ENCODE measurements at regions of chr9 and their contacts with region 1.

Region 1: GRCh38 chr9:72280913-72281500 is 84.0 kb downstream of the ZFAND5 start:
- DNase-seq: no peak
- H3K4me3 ChIP-seq: no peak overlapping the region
- H3K27ac ChIP-seq: no peak overlapping the region
- H3K4me1 ChIP-seq: no peaks in the 10 kb centered on the region
- H3K27me3 ChIP-seq: no peaks in the 10 kb centered on the region
- CTCF ChIP-seq: peak; percentile 67 to 93 (median 88)
- POLR2A ChIP-seq: no peak

Region 2: DNA sequence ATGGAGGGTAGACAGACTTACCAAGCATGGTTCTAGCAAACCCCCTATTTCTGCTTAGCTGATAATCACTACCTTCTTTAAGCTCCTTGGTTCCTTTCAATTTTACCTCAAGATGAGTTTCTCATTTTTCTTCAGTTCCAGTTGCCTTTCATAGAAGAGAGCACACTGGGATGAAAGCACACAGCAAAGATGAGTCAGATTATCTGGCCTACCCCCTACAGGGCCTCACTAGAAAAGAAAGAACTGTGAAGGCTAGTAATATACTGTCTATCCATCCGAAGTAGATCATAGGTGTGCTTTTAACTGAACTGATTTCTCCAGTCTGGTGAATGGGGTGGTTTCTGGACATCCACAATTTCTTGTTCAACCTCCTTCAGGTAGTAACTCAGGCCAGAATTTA is 1282.0 kb before region 1 on chr9:
- intact Hi-C with region 1: no loop called
- DNase-seq: no peak
- H3K4me3 ChIP-seq: no peak overlapping the region
- H3K27ac ChIP-seq: no peak overlapping the region
- H3K4me1 ChIP-seq: no peaks in the 10 kb centered on the region
- H3K27me3 ChIP-seq: no peaks in the 10 kb centered on the region
- CTCF ChIP-seq: no peak
- POLR2A ChIP-seq: no peak

Region 3: DNA sequence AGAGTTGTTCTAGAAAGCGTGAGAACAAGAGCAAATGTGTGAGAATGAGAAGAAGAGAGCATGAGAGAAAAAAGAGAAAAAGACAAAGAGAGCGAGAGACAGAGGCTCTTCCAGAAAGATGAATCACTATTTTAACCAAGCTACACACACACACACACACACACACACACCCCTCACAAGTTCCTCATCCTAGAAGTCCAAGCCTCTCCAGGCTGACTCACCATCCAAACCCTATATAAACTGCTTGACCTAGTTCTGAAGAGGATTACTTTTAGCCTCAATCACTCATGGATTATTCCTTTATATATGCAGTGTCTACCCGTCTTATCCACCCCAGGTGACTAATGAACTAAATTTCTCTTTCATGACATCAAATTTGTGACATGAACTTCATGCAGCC is 258.2 kb before region 1 on chr9:
- intact Hi-C with region 1: no loop called
- DNase-seq: no peak
- H3K4me3 ChIP-seq: no peak overlapping the region
- H3K27ac ChIP-seq: peak overlapping the region in 3 of 4 donors; percentile 53 to 78 (median 57)
- H3K4me1 ChIP-seq: peaks cover 0 to 22% (median 0%) of the 10 kb centered on the region in 3 donors
- H3K27me3 ChIP-seq: no peaks in the 10 kb centered on the region
- CTCF ChIP-seq: no peak
- POLR2A ChIP-seq: no peak

Region 4: GRCh38 chr9:72635197-72635596 is 354.2 kb after region 1 on chr9:
- intact Hi-C with region 1: no loop called
- DNase-seq: no peak
- H3K4me3 ChIP-seq: no peak overlapping the region
- H3K27ac ChIP-seq: no peak overlapping the region
- H3K4me1 ChIP-seq: no peaks in the 10 kb centered on the region
- H3K27me3 ChIP-seq: no peaks in the 10 kb centered on the region
- CTCF ChIP-seq: no peak
- POLR2A ChIP-seq: no peak

Region 5: GRCh38 chr9:72817413-72817812 is 536.4 kb after region 1 on chr9:
- intact Hi-C with region 1: loop called (anchors 5 kb)
- DNase-seq: no peak
- H3K4me3 ChIP-seq: no peak overlapping the region
- H3K27ac ChIP-seq: no peak overlapping the region
- H3K4me1 ChIP-seq: peaks cover 0 to 9% (median 0%) of the 10 kb centered on the region in 3 donors
- H3K27me3 ChIP-seq: no peaks in the 10 kb centered on the region
- CTCF ChIP-seq: no peak
- POLR2A ChIP-seq: no peak

Region 6: DNA sequence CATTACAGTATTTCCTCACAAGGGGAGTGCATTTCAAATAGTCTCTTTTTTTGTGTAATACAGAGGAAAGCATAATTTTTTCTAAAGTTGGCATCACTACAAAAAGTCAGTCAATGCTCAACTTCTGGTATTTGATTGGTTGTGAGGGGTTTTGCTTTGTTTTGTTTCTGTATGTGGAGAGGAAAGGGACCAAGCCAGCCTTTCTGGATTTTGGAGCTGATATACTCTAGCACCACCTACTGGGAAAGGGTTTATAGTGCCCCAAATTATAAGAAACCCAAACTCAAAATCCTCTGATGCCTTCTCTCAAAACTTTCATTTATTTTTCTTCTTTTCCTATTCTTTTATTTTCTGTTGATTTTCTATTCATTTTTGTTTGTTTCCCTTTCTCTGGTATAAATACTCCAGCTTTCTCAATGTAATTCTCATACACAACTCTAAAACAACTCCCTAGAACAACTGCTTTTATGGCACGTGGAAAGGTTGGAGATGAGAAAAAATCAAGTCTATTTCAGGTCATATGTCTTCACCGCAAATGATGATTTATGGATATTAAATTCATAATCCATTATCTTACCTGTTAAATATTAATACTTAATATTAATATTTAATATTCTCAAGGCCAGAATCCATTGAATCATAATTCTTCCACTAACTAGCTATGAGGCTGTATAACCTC is 801.1 kb after region 1 on chr9:
- intact Hi-C with region 1: loop called (anchors 10 kb)
- DNase-seq: no peak
- H3K4me3 ChIP-seq: no peak overlapping the region
- H3K27ac ChIP-seq: no peak overlapping the region
- H3K4me1 ChIP-seq: peaks cover 4 to 21% (median 5%) of the 10 kb centered on the region in 3 donors
- H3K27me3 ChIP-seq: no peaks in the 10 kb centered on the region
- CTCF ChIP-seq: peak in 5 of 6 experiments; percentile 62 to 80 (median 73)
- POLR2A ChIP-seq: no peak